ENCODE measurements at regions of chr3 and their contacts with region 1.

Region 1: DNA sequence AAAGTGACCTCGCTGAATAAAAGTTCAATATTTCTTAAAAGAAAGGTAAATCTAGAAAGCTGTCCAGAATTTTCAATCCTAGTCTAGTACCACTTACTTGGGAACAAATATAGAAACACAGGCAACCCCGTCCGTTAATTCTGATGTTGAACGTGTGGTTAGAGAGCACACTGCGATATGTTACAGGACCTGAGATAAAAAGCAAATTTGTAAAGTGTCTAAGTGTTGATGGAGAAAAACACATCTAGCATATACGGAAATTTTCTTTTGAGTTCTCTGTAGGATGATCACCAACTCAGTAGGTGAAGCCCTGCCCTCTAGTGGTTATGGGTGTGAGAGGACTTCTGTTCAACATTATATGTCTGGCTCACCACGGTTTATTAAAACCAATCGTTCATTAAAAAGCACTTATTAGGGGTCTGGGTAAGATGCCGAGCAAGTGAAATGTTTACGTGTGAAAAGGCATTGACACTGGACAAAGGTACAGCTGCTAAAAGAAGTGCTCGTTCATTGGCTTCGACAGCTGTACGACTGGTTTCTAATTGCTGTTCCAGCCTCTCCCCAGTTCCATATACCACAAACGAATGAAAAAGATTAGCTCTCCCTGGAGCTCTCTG is 1.0 kb upstream of the ATP2C1 start:
- DNase-seq: peak; percentile 85 to 92 (median 90)
- H3K4me3 ChIP-seq: peak overlapping the region; percentile 72 to 96 (median 86)
- H3K27ac ChIP-seq: peak overlapping the region; percentile 89 to 96
- H3K4me1 ChIP-seq: peaks cover 6 to 52% (median 26%) of the 10 kb centered on the region in 4 experiments
- H3K27me3 ChIP-seq: no peaks in the 10 kb centered on the region

Region 2: GRCh38 chr3:130748981-130749380 is 143.9 kb before region 1 on chr3:
- CTCF ChIA-PET with region 1: interaction called, 11 read pairs
- POLR2A ChIA-PET with region 1: interaction called, 5 read pairs
- DNase-seq: no peak
- H3K4me3 ChIP-seq: peak overlapping the region in 1 of 7 experiments; percentile 2
- H3K27ac ChIP-seq: no peak overlapping the region
- H3K4me1 ChIP-seq: peaks cover 9 to 28% (median 15%) of the 10 kb centered on the region in 4 experiments
- H3K27me3 ChIP-seq: no peaks in the 10 kb centered on the region

Region 3: GRCh38 chr3:130850044-130850797 is 42.6 kb before region 1 on chr3:
- CTCF ChIA-PET with region 1: interaction called, 41 read pairs
- POLR2A ChIA-PET with region 1: interaction called, 12 read pairs
- DNase-seq: peak; percentile 99 to 100 (median 99)
- H3K4me3 ChIP-seq: peak overlapping the region in 6 of 7 experiments; percentile 77 to 100 (median 91)
- H3K27ac ChIP-seq: peak overlapping the region; percentile 100
- H3K4me1 ChIP-seq: peaks cover 17 to 65% (median 45%) of the 10 kb centered on the region in 4 experiments
- H3K27me3 ChIP-seq: no peaks in the 10 kb centered on the region

Region 4: GRCh38 chr3:131020122-131020693 is 127.3 kb after region 1 on chr3:
- CTCF ChIA-PET with region 1: no interaction called
- POLR2A ChIA-PET with region 1: no interaction called
- DNase-seq: peak; percentile 67 to 90 (median 87)
- H3K4me3 ChIP-seq: peak overlapping the region in 3 of 7 experiments; percentile 9 to 26 (median 13)
- H3K27ac ChIP-seq: no peak overlapping the region
- H3K4me1 ChIP-seq: peaks cover 0 to 10% (median 4%) of the 10 kb centered on the region in 4 experiments
- H3K27me3 ChIP-seq: no peaks in the 10 kb centered on the region

Measured in common myeloid progenitor, CD34-positive (primary cell).